Activated CD4-positive, alpha-beta memory T cell treated with anti-CD3 and anti-CD28 coated beads, Interleukin-2, amount 10 ng/mL, durations not matched to agents 7 days and 5 days (primary cell): ENCODE measurements at regions of chr13 and their contacts with region 1.

Region 1: DNA sequence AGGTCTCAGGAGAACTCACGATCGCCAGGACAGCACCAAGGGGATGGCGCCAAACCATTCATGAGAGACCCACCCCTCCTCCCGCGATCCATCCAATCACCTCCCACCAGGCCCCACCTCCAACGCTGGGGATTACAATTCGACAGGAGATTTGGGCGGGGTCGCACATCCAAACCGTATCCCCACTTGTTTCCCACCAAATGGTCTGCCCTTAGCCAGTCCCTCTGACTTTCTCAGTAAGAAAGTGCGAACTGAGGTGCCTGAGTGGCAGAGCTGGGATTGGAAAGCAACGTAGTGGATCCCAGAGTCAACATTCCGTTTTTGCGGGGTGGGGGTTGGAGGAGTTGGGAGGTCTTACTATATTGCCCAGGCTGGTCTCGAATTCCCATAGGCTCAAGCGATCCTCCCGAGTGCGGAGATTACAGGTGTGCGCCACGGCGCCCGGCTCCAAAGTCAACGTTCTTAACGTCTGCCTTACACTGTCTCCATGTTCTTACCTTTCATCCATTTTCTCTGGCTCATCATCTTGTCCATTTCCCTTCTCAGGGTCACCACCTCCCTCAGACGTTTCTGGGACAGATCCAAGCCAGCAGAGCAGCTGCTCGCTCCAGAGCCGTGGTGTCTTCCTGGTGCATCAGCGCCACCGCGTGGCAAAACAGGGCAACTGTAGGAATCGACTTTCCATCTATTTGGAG is 102.7 kb upstream of the ABCC4 start:
- DNase-seq: peak; percentile 79
- H3K4me3 Mint-ChIP-seq: peak overlapping the region; percentile 80
- H3K27ac Mint-ChIP-seq: no peak overlapping the region
- H3K4me1 Mint-ChIP-seq: peaks cover 10% of the 10 kb centered on the region
- H3K27me3 Mint-ChIP-seq: peaks cover 3% of the 10 kb centered on the region

Region 2: DNA sequence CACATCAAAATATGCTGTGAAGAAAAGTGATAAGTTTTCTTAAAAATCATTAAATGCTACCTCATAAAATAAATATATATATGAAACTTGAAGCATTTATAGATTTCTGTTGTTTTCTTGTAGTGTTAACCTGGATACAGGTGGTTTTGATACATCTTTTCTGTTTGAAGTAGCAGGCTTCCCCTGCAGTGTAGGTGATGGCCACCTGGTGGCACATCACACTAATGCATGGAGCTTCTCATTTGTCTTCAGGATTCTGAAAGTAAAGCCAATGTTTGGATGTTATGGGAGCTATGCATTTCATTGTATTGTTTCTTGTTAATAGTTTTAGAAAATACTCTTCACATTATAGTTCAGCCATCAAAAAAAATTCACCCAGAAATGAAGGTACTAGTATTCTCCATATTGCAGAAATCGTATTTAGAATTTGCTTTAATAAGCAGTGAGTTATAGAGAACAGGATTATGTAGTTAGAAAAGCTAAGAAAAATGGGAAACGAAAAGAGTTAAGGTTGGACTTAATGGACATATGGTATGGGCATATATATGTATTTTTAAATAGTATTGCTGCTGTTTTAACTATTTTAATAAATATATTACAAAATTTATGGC is 783.6 kb before region 1 on chr13:
- CTCF ChIA-PET with region 1: interaction called, 11 read pairs
- POLR2A ChIA-PET with region 1: no interaction called
- DNase-seq: peak; percentile 42
- H3K4me3 Mint-ChIP-seq: no peak overlapping the region
- H3K27ac Mint-ChIP-seq: no peak overlapping the region
- H3K4me1 Mint-ChIP-seq: peaks cover 8% of the 10 kb centered on the region
- H3K27me3 Mint-ChIP-seq: no peaks in the 10 kb centered on the region

Region 3: GRCh38 chr13:95191821-95192563 is 212.0 kb before region 1 on chr13:
- CTCF ChIA-PET with region 1: interaction called, 223 read pairs
- POLR2A ChIA-PET with region 1: interaction called, 4 read pairs
- DNase-seq: peak; percentile 66
- H3K4me3 Mint-ChIP-seq: no peak overlapping the region
- H3K27ac Mint-ChIP-seq: no peak overlapping the region
- H3K4me1 Mint-ChIP-seq: peaks cover 12% of the 10 kb centered on the region
- H3K27me3 Mint-ChIP-seq: no peaks in the 10 kb centered on the region

Region 4: GRCh38 chr13:95378603-95379002 is 25.4 kb before region 1 on chr13:
- CTCF ChIA-PET with region 1: interaction called, 23 read pairs
- POLR2A ChIA-PET with region 1: no interaction called
- DNase-seq: no peak
- H3K4me3 Mint-ChIP-seq: no peak overlapping the region
- H3K27ac Mint-ChIP-seq: no peak overlapping the region
- H3K4me1 Mint-ChIP-seq: peaks cover 5% of the 10 kb centered on the region
- H3K27me3 Mint-ChIP-seq: peaks cover 3% of the 10 kb centered on the region

Region 5: DNA sequence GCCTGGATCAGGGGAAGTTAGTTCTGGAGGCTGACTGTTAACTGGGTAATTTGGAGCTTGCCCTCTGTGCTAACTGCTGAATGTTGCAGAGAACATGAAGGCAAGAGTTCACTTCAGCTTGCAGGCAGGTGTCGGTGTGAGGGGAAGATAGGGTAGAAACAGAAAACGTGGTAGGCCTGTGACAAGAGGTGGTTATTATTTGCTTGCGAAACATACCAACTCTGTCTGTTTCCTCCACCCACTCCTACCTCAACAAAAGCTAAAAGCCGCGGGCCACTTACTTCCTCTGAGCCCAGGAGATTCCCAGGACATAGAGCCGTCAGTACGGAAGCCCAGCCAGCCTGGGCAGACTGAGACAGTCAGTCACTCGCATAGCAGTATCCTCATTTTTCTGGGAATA is 16.5 kb after region 1 on chr13:
- CTCF ChIA-PET with region 1: interaction called, 23 read pairs
- POLR2A ChIA-PET with region 1: no interaction called
- DNase-seq: no peak
- H3K4me3 Mint-ChIP-seq: no peak overlapping the region
- H3K27ac Mint-ChIP-seq: no peak overlapping the region
- H3K4me1 Mint-ChIP-seq: peaks cover 3% of the 10 kb centered on the region
- H3K27me3 Mint-ChIP-seq: peaks cover 13% of the 10 kb centered on the region